K562 (cell line): ENCODE measurements at regions of chr20 and their contacts with region 1.

Region 1: DNA sequence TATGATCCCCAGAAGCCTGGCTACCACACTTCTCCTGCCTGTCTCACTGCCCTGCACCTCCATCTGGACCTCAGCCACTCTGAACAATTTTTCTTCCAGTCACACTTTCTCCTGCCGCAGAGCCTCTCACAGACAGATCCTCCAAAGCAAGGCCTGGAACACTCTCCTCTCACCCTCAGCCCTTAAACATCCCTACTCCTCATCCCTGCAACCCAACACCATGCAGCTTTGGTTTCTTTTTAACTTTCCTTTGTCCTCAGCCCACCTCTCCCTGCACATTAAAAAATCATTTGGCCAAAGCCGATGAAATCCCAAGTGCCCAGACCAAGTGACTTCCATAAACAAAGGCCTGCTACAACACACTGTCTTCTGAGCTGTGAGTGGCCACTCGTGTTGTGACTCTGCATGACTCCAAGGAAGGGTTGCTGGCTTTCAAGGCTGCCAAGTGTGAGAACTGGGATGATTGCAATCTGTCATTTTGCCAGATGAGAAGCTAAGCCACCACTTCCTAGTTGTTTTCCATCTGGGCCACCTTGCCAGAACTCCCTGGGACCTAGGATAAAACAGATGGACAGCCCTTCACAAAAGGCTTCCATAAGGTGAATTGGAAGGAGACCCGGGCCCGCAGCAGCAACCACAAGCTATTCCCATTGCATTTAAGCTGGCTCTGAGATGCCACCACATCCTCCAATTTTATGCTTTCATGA is 144.4 kb upstream of the SSTR4 start:
- DNase-seq: no peak
- ATAC-seq: no peak
- H3K4me3 ChIP-seq: no peak overlapping the region
- H3K27ac ChIP-seq: no peak overlapping the region
- H3K4me1 ChIP-seq: no peaks in the 10 kb centered on the region
- H3K27me3 ChIP-seq: no peaks in the 10 kb centered on the region; a peak in 1 of 5 replicates
- CTCF ChIP-seq: no peak
- EP300 ChIP-seq: no peak
- POLR2A ChIP-seq: no peak
- RAD21 ChIP-seq: no peak

Region 2: GRCh38 chr20:22918286-22918983 is 27.7 kb after region 1 on chr20:
- CTCF ChIA-PET with region 1: no interaction called
- POLR2A ChIA-PET with region 1: no interaction called
- in situ Hi-C with region 1: no loop called
- intact Hi-C with region 1: no loop called
- DNase-seq: no peak
- ATAC-seq: no peak
- H3K4me3 ChIP-seq: no peak overlapping the region
- H3K27ac ChIP-seq: no peak overlapping the region
- H3K4me1 ChIP-seq: peaks cover 0 to 36% of the 10 kb centered on the region in 2 experiments; a peak in 4 of 5 replicates
- H3K27me3 ChIP-seq: no peaks in the 10 kb centered on the region
- CTCF ChIP-seq: no peak
- EP300 ChIP-seq: no peak
- POLR2A ChIP-seq: no peak
- RAD21 ChIP-seq: no peak

Region 3: DNA sequence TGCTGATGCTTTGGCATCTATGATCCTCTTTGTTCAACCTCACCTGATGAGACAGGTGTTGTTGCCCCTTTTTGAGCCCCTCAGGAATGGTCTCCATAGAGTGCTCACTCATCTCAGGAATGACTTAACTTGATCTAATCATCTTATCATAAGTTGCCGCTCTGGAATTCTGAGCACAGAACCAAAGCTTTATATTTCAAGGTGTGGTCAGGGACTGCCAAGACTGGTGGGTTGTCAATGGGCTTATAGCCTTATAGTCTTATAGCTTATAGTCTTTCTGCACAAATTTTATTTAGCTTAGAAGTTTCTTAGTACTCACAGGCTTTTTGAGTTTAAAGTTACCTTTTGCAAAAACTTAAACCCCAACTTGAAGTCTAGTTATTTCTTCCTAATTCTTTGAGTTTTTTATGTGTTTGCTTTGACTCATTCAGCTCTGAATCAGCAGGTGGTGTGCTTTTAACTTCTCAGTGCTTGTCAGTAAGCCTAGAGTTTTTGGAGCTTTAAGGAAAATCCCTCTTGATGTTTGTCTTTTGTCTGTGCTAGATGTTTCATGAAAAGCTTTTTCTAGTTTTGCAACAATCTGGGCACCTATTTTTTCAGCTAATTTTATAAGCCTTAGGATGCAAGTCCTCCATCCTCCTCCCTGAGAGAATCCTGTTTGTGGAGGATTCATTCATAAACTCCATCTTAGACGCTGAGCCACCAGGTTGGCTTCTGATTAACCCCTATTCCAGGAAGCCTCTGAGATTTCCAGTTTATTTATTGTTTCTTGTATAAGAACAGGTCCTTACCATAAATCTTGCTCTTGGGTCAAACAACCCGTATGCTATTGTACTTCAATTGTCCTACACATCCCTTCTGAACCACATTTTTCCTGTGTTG is 72.1 kb after region 1 on chr20:
- CTCF ChIA-PET with region 1: no interaction called
- POLR2A ChIA-PET with region 1: no interaction called
- in situ Hi-C with region 1: no loop called
- intact Hi-C with region 1: loop called (anchors 10 kb)
- DNase-seq: no peak
- ATAC-seq: no peak
- H3K4me3 ChIP-seq: no peak overlapping the region
- H3K27ac ChIP-seq: no peak overlapping the region
- H3K4me1 ChIP-seq: no peaks in the 10 kb centered on the region; a peak in 1 of 5 replicates
- H3K27me3 ChIP-seq: peaks cover 0 to 21% of the 10 kb centered on the region in 2 experiments; a peak in 3 of 5 replicates
- CTCF ChIP-seq: no peak
- EP300 ChIP-seq: no peak
- POLR2A ChIP-seq: no peak
- RAD21 ChIP-seq: no peak